Activated naive CD4-positive, alpha-beta T cell treated with anti-CD3 and anti-CD28 coated beads for 36 hours (primary cell): ENCODE measurements at regions of chr12 and their contacts with region 1.

Region 1: GRCh38 chr12:54379401-54380201 is 4.9 kb downstream of the ZNF385A start:
- DNase-seq: peak; percentile 96
- H3K4me3 Mint-ChIP-seq: peak overlapping the region; percentile 53
- H3K27ac Mint-ChIP-seq: no peak overlapping the region
- H3K4me1 Mint-ChIP-seq: peaks cover 14% of the 10 kb centered on the region
- H3K27me3 Mint-ChIP-seq: no peaks in the 10 kb centered on the region

Region 2: GRCh38 chr12:54294152-54294952 is 85.2 kb before region 1 on chr12:
- CTCF ChIA-PET with region 1: interaction called, 86 read pairs
- intact Hi-C with region 1: loop called (anchors 1 kb)
- DNase-seq: peak; percentile 82
- H3K4me3 Mint-ChIP-seq: no peak overlapping the region
- H3K27ac Mint-ChIP-seq: no peak overlapping the region
- H3K4me1 Mint-ChIP-seq: no peaks in the 10 kb centered on the region
- H3K27me3 Mint-ChIP-seq: peaks cover 7% of the 10 kb centered on the region

Region 3: DNA sequence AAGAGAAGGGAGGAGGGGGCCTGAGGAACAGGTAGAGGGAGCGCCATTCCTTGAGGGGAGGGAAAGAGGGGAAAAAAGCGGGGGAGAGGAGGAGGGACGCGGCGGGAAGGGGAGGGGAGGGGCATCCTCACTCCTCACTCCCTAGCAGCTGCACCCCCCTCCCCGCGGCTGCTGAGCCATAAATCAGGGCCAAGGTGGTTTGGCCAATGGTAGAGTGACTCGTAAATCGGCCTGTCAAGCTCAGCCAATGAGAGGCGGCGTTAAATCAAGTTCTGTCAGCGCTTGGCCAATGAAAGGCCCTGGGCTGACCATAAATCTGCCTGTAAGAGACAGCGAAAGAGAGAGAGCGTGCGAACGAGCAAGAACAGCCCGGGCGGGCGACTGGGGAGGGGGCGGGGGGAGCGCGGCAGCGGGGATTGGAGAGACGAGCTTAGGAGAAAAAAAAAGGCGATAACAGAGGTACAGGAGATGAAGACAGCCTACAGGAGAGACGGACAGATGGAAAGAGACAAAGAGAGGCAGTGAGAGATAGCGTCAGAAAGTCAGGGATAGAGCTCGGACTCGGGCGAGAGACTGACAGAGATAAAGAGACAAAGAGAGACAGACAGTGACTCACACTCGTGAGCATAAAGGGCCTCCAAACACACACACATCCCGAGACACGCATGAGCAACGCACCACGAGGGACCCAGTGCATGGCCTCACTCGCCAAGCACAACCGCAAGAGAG is 20.4 kb before region 1 on chr12:
- CTCF ChIA-PET with region 1: interaction called, 19 read pairs
- intact Hi-C with region 1: no loop called
- DNase-seq: peak; percentile 98
- H3K4me3 Mint-ChIP-seq: no peak overlapping the region
- H3K27ac Mint-ChIP-seq: no peak overlapping the region
- H3K4me1 Mint-ChIP-seq: peaks cover 19% of the 10 kb centered on the region
- H3K27me3 Mint-ChIP-seq: no peaks in the 10 kb centered on the region

Region 4: DNA sequence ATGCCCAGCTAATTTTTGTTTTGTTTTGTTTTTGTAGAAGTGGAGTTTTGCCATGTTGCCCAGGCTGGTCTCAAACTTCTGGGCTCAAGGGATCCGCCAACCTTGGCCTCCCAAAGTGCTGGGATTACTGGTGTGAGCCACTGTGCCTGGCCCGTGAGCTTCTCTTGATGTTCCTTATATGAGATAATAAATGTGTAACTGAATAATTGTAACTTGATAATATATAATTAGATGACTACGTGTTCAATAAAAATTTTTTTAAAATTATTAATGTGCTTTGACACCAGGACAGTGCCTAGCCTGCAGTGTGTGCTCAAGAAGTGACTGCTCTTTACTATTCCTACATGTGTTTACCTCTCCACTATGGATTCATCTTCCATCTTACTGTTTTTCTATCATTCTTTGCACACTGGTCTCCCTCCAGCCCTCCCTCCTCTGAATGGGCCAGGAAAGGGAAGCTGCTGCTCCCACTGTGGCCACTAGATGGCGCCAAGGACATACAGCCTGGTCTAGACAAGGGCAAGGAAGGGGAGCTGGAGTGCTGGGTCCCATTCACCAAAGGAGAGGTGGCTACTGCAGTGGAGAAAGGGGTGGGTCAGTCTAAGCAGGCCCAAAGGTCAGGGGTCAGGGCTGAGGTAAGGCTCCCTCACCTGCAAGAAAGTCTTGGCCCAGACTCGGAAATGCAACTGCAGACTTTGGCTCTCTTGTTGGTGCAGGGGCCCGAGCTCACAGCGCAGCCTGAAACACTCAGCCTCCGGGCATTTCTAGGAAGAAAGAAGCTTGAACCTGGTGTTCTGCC is 19.6 kb after region 1 on chr12:
- CTCF ChIA-PET with region 1: interaction called, 45 read pairs
- intact Hi-C with region 1: no loop called
- DNase-seq: peak; percentile 95
- H3K4me3 Mint-ChIP-seq: no peak overlapping the region
- H3K27ac Mint-ChIP-seq: peak overlapping the region; percentile 21
- H3K4me1 Mint-ChIP-seq: peaks cover 8% of the 10 kb centered on the region
- H3K27me3 Mint-ChIP-seq: no peaks in the 10 kb centered on the region

Region 5: DNA sequence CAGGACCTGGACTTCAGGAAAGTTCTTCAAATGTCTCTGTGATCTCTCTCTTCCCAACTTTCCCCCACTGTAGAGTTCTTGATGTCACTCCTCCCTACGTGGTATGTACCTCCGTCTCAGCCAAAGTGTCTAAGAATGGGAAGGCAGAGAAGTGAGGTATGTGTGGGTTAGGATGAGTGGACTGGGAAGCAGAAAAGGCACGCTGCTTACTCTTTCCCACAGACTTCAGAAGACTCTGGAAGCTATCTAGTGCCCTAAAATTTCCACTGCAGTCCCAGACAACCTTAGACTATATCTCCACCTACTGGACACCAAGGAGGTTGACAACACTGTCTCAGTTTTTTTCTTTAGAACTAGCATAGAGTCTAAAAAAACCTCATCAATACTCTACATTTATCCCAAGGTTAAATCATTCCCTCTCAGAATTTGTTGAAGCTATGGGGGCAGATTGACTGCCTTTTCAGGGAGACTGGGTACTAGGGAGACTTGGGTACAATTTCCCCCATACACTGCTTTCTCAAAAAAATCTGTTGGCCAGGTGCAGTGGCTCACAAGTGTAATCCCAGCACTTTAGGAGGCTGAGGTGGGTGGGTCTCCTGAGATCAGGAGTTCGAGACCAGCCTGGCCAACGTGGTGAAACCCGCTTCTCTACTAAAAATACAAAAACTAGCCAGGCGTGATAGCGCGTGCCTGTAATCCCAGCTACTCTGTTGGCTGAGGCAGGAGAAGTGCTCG is 60.1 kb after region 1 on chr12:
- CTCF ChIA-PET with region 1: interaction called, 37 read pairs
- intact Hi-C with region 1: no loop called
- DNase-seq: no peak
- H3K4me3 Mint-ChIP-seq: no peak overlapping the region
- H3K27ac Mint-ChIP-seq: no peak overlapping the region
- H3K4me1 Mint-ChIP-seq: peaks cover 13% of the 10 kb centered on the region
- H3K27me3 Mint-ChIP-seq: no peaks in the 10 kb centered on the region